Transverse colon (tissue), 4 donors: ENCODE measurements at regions of chr10 and their contacts with region 1.

Region 1: GRCh38 chr10:59625721-59626522 is 83.7 kb downstream of the SLC16A9 start:
- DNase-seq: peak; percentile 23
- H3K4me3 ChIP-seq: no peak overlapping the region
- H3K27ac ChIP-seq: peak overlapping the region in 2 of 4 donors; percentile 12 to 47
- H3K4me1 ChIP-seq: peaks cover 0 to 7% (median 4%) of the 10 kb centered on the region in 4 donors
- H3K27me3 ChIP-seq: no peaks in the 10 kb centered on the region
- CTCF ChIP-seq: peak; percentile 77 to 94 (median 77)
- EP300 ChIP-seq: no peak
- POLR2A ChIP-seq: no peak

Region 2: GRCh38 chr10:58781873-58782488 is 843.9 kb before region 1 on chr10:
- in situ Hi-C with region 1: loop called in 2 of 4 experiments (anchors 25 kb)
- intact Hi-C with region 1: no loop called
- DNase-seq: no peak
- H3K4me3 ChIP-seq: no peak overlapping the region
- H3K27ac ChIP-seq: peak overlapping the region in 1 of 4 donors; percentile 66
- H3K4me1 ChIP-seq: peaks cover 2 to 22% (median 17%) of the 10 kb centered on the region in 4 donors
- H3K27me3 ChIP-seq: no peaks in the 10 kb centered on the region
- CTCF ChIP-seq: peak; percentile 54 to 57 (median 56)
- EP300 ChIP-seq: no peak
- POLR2A ChIP-seq: no peak

Region 3: GRCh38 chr10:59240582-59241183 is 385.2 kb before region 1 on chr10:
- in situ Hi-C with region 1: loop called in 3 of 4 experiments (anchors 10 to 25 kb)
- intact Hi-C with region 1: loop called (anchors 10 kb)
- DNase-seq: no peak
- H3K4me3 ChIP-seq: no peak overlapping the region
- H3K27ac ChIP-seq: no peak overlapping the region
- H3K4me1 ChIP-seq: no peaks in the 10 kb centered on the region
- H3K27me3 ChIP-seq: no peaks in the 10 kb centered on the region
- CTCF ChIP-seq: peak; percentile 63 to 83 (median 67)
- EP300 ChIP-seq: no peak
- POLR2A ChIP-seq: no peak

Region 4: GRCh38 chr10:59434463-59435321 is 191.2 kb before region 1 on chr10:
- in situ Hi-C with region 1: no loop called
- intact Hi-C with region 1: no loop called
- DNase-seq: no peak
- H3K4me3 ChIP-seq: no peak overlapping the region
- H3K27ac ChIP-seq: no peak overlapping the region
- H3K4me1 ChIP-seq: peaks cover 0 to 3% (median 0%) of the 10 kb centered on the region in 4 donors
- H3K27me3 ChIP-seq: no peaks in the 10 kb centered on the region
- CTCF ChIP-seq: no peak
- EP300 ChIP-seq: no peak
- POLR2A ChIP-seq: no peak

Region 5: GRCh38 chr10:59557052-59557451 is 68.9 kb before region 1 on chr10:
- in situ Hi-C with region 1: no loop called
- intact Hi-C with region 1: no loop called
- DNase-seq: no peak
- H3K4me3 ChIP-seq: no peak overlapping the region
- H3K27ac ChIP-seq: no peak overlapping the region
- H3K4me1 ChIP-seq: peaks cover 0 to 5% (median 0%) of the 10 kb centered on the region in 4 donors
- H3K27me3 ChIP-seq: no peaks in the 10 kb centered on the region
- CTCF ChIP-seq: no peak
- EP300 ChIP-seq: no peak
- POLR2A ChIP-seq: no peak

Region 6: GRCh38 chr10:59830601-59831259 is 204.8 kb after region 1 on chr10:
- in situ Hi-C with region 1: no loop called
- intact Hi-C with region 1: loop called (anchors 10 kb)
- DNase-seq: peak; percentile 46
- H3K4me3 ChIP-seq: no peak overlapping the region
- H3K27ac ChIP-seq: no peak overlapping the region
- H3K4me1 ChIP-seq: peaks cover 4 to 23% (median 14%) of the 10 kb centered on the region in 4 donors
- H3K27me3 ChIP-seq: no peaks in the 10 kb centered on the region
- CTCF ChIP-seq: peak; percentile 46 to 79 (median 75)
- EP300 ChIP-seq: no peak
- POLR2A ChIP-seq: no peak

Region 7: DNA sequence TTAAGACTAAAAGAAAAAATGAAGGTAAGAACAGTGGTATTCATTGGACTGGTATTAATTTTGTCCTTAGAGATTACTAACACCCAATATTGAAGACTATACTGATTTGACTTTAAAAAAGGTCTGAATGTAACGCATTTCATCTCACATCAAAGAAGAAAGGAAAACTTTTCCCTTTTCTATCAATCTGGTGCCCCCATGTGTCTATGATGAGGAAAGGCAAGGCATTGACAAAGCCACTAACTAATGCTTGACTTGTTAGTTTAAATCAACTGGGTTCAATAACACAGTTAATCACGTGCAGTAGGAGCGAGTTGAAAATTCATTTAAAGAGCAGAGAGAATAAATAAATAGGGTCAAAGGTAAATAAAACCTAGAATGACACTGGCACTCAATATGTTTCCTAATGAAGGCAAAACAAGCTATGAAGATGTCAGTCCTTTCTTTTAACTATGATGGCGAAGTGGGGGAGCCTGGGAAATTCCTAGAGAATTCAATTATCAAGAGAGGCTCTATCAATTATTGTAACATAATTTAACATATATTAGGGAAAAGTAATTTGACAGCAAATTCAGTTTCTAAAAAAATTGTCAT is 582.9 kb after region 1 on chr10:
- in situ Hi-C with region 1: loop called in 2 of 4 experiments (anchors 25 kb)
- intact Hi-C with region 1: loop called (anchors 5 kb)
- DNase-seq: no peak
- H3K4me3 ChIP-seq: no peak overlapping the region
- H3K27ac ChIP-seq: no peak overlapping the region
- H3K4me1 ChIP-seq: peaks cover 0 to 9% (median 2%) of the 10 kb centered on the region in 4 donors
- H3K27me3 ChIP-seq: no peaks in the 10 kb centered on the region
- CTCF ChIP-seq: peak; percentile 71 to 74 (median 74)
- EP300 ChIP-seq: no peak
- POLR2A ChIP-seq: no peak